Mammary epithelial cell (primary cell): ENCODE measurements at regions of chr11 and their contacts with region 1.

Region 1: DNA sequence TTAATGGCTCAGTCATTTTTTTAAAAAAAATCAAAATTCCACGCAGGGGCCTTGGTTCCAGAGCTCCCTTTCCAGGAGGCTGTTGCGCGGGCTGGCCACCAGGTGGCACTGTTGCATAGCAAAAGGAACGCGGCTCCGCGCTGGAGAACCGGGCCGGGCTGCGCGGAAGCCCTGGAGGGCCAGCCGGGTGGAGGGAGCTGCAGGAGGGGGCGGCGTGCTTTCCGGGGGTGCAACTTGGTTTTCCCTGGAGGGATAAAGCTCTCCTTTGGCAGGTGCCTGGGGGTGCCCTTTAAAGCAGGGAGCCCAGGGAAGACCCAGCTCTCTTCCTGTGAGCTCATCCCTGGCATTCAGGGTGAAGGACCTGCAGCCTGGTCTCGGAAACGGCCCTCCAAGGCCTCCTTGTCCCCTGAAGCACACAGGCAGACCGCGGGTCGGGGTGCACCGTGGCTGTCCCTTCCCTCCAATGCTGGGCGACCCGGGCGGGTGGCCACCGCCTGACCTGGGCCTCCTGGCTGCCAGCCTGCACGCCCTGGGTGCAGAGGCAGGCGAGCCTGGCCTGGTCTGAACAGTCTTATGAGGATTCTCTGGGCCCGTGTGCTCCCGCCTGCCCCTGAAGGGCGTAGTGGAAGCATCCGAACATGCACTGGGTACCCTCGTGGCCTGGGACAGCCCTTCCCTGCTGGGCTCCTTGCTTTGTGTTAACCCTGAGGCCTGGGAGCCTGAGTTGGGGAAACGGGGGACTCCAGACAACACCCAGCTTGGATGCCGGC is 23.4 kb downstream of the KRTAP5-5 start:
- DNase-seq: peak; percentile 20
- H3K4me3 ChIP-seq: no peak overlapping the region
- H3K27ac ChIP-seq: no peak overlapping the region
- H3K4me1 ChIP-seq: peaks cover 23% of the 10 kb centered on the region
- H3K27me3 ChIP-seq: no peaks in the 10 kb centered on the region
- CTCF ChIP-seq: peak; percentile 79 to 93

Region 2: GRCh38 chr11:1576825-1577224 is 76.1 kb before region 1 on chr11:
- CTCF ChIA-PET with region 1: no interaction called
- dilution Hi-C with region 1: no loop called
- in situ Hi-C with region 1: no loop called
- intact Hi-C with region 1: no loop called
- DNase-seq: peak; percentile 58
- H3K4me3 ChIP-seq: no peak overlapping the region
- H3K27ac ChIP-seq: no peak overlapping the region
- H3K4me1 ChIP-seq: peaks cover 10% of the 10 kb centered on the region
- H3K27me3 ChIP-seq: peaks cover 8% of the 10 kb centered on the region
- CTCF ChIP-seq: no peak

Region 3: DNA sequence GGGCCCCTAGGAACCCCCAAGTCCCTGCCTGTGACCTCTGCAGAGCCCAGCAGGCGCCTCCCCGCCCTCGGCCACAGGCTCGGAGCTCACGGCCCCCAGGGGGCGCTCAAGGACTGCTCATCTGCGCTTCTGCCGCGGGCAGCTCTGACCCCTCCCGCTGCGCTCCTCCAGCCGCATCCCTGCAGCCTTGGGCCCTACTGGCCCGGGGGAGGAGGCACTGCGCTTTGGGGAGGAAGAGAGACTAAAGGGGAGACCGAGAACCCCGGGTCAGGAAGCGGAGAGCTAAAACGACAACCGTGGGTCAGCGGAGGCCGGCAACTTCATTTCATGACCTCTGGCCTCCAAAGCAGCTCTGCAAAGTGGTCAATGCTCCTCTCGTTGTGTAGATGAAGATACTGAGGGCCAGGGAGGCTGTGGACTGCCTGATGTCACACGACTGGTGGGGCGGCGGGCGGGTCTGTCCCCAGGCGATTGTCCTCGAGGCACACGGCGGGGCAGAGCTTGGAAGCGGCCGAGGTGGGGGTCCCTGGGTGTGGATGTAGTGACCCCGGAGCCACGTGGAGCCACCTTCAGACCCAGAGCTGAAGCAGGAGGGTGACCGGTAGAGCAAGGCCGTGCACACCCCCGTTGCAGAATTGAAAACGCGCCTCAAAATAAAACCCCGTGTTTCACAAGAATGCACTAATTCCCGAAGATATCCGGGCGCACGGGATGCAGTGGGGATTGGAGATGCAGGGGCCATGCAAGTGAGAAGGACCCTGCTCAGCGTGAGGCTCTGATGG is 41.3 kb after region 1 on chr11:
- CTCF ChIA-PET with region 1: interaction called, 5 read pairs
- dilution Hi-C with region 1: no loop called
- in situ Hi-C with region 1: no loop called
- intact Hi-C with region 1: loop called (anchors 1 kb)
- DNase-seq: peak; percentile 58
- H3K4me3 ChIP-seq: peak overlapping the region in 2 of 3 experiments; percentile 49 to 54
- H3K27ac ChIP-seq: no peak overlapping the region
- H3K4me1 ChIP-seq: peaks cover 14% of the 10 kb centered on the region
- H3K27me3 ChIP-seq: peaks cover 8% of the 10 kb centered on the region
- CTCF ChIP-seq: peak; percentile 72 to 92

Region 4: GRCh38 chr11:1749414-1750312 is 96.7 kb after region 1 on chr11:
- CTCF ChIA-PET with region 1: no interaction called
- dilution Hi-C with region 1: no loop called
- in situ Hi-C with region 1: no loop called
- intact Hi-C with region 1: loop called (anchors 5 kb)
- DNase-seq: peak; percentile 92
- H3K4me3 ChIP-seq: peak overlapping the region; percentile 52 to 74 (median 67)
- H3K27ac ChIP-seq: peak overlapping the region; percentile 54
- H3K4me1 ChIP-seq: peaks cover 59% of the 10 kb centered on the region
- H3K27me3 ChIP-seq: no peaks in the 10 kb centered on the region
- CTCF ChIP-seq: no peak

Region 5: DNA sequence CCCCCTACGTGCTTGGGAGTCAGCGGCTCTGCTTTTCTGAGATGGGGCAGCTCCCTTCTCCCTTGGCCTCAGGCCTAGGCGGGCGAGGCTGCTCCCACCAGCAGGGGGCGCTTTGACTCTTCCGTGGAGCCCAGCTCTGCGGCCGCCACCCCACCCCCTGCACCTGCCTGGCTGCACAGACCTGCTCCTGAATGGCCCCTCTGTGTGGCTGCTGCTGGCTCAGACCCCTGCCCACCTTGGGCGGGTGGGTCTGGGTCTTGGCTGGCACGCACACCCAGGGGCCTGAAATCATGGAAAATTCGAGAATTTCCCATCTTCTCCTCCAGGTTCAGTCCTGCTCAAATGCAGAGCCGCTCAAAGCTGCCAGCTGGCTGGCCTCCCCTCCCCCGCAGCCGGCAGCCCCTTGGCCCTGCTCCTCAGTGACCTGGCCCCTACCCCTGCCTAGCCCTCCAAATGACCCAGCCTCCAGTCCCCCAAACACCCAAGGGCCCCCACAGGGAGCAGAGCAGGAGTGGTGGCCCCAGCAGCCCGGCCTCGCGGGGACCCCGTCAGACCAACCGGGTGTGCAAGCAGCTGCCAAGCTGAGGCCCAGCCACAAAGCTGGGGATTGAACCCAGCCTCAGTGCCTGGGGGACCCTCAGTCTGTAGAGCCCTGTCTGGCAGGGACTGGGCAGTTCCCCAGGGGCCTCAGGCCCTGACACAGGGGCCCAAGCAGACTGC is 229.7 kb after region 1 on chr11:
- CTCF ChIA-PET with region 1: interaction called, 3 read pairs
- dilution Hi-C with region 1: no loop called
- in situ Hi-C with region 1: no loop called
- intact Hi-C with region 1: loop called (anchors 2 kb)
- DNase-seq: peak; percentile 54
- H3K4me3 ChIP-seq: no peak overlapping the region
- H3K27ac ChIP-seq: no peak overlapping the region
- H3K4me1 ChIP-seq: no peaks in the 10 kb centered on the region
- H3K27me3 ChIP-seq: no peaks in the 10 kb centered on the region
- CTCF ChIP-seq: peak; percentile 76 to 94

Region 6: DNA sequence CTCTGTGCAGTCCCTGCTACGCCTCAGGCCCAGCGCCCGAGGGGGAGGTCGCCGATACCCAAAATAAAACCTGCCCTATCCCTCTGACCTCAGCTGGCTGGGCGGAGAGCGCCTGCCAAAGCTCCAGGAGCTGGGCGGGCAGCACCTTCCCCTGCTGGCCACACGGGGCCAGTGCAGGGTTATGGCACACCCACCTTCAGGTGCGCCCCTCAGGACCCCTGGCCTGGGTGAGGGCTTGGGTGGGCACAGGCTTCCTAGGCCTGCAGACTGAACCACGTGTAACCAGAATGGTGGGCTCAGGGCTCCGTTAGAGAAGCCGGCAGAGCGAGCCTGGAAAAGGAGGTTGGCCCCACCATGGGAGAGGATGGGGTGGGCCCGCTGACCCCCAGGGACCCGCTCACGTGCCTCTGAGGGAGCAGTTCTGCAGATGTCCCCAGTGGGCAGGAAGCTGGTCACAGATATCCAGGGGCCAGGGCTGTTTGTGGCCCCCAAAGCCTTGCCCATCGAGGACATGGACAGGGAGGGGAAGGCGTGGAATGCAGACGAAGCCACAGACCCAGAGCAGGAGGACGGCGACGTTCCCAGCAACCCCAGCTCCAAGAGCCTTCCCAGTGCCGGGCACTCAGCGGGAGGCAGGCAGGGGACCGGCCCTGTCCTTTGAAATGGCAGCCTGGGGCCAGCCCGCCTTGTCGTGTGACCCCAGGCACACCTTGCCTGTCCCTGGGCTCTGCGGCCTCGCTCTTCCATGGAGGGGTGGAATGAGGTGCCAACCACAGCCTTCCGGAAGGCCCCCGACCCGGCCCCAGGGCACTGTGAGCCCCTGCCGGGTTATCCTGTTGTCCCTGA is 264.9 kb after region 1 on chr11:
- CTCF ChIA-PET with region 1: no interaction called
- dilution Hi-C with region 1: no loop called
- in situ Hi-C with region 1: no loop called
- intact Hi-C with region 1: loop called (anchors 1 kb)
- DNase-seq: no peak
- H3K4me3 ChIP-seq: no peak overlapping the region
- H3K27ac ChIP-seq: no peak overlapping the region
- H3K4me1 ChIP-seq: no peaks in the 10 kb centered on the region
- H3K27me3 ChIP-seq: no peaks in the 10 kb centered on the region
- CTCF ChIP-seq: peak in 1 of 2 donors; percentile 22